ENCODE measurements at regions of chr3 and their contacts with region 1.

Region 1: GRCh38 chr3:23865595-23866450 is 51.0 kb downstream of the NKIRAS1 start:
- DNase-seq: peak in 1 of 2 donors; percentile 19
- ATAC-seq: peak; percentile 30 to 80 (median 48)
- H3K4me3 ChIP-seq: no peak overlapping the region
- H3K27ac ChIP-seq: peak overlapping the region in 9 of 10 donors; percentile 7 to 78 (median 48)
- H3K4me1 ChIP-seq: peaks cover 10 to 75% (median 51%) of the 10 kb centered on the region in 9 donors
- H3K27me3 ChIP-seq: no peaks in the 10 kb centered on the region
- CTCF ChIP-seq: no peak

Region 2: GRCh38 chr3:23474580-23475357 is 391.1 kb before region 1 on chr3:
- intact Hi-C with region 1: loop called in 1 of 10 experiments (anchors 5 kb)
- DNase-seq: no peak
- ATAC-seq: no peak
- H3K4me3 ChIP-seq: no peak overlapping the region
- H3K27ac ChIP-seq: no peak overlapping the region
- H3K4me1 ChIP-seq: peaks cover 0 to 6% (median 0%) of the 10 kb centered on the region in 9 donors
- H3K27me3 ChIP-seq: no peaks in the 10 kb centered on the region
- CTCF ChIP-seq: no peak

Region 3: GRCh38 chr3:23845326-23846221 is 20.2 kb before region 1 on chr3:
- intact Hi-C with region 1: loop called in 1 of 10 experiments (anchors 1 kb)
- DNase-seq: no peak
- ATAC-seq: no peak
- H3K4me3 ChIP-seq: no peak overlapping the region
- H3K27ac ChIP-seq: no peak overlapping the region
- H3K4me1 ChIP-seq: peaks cover 0 to 27% (median 3%) of the 10 kb centered on the region in 9 donors
- H3K27me3 ChIP-seq: no peaks in the 10 kb centered on the region
- CTCF ChIP-seq: no peak